PC-9 (cell line): ENCODE measurements at regions of chr5 and their contacts with region 1.

Region 1: GRCh38 chr5:143824851-143825720 is 13.1 kb downstream of the HMHB1 start:
- DNase-seq: peak; percentile 42 to 79
- H3K4me3 ChIP-seq: no peak overlapping the region
- H3K27ac ChIP-seq: no peak overlapping the region
- H3K4me1 ChIP-seq: peaks cover 15% of the 10 kb centered on the region
- H3K27me3 ChIP-seq: no peaks in the 10 kb centered on the region
- CTCF ChIP-seq: peak; percentile 97

Region 2: GRCh38 chr5:143106174-143106573 is 718.9 kb before region 1 on chr5:
- CTCF ChIA-PET with region 1: interaction called, 3 read pairs
- POLR2A ChIA-PET with region 1: no interaction called
- intact Hi-C with region 1: loop called (anchors 5 kb)
- DNase-seq: peak; percentile 20 to 40
- H3K4me3 ChIP-seq: no peak overlapping the region
- H3K27ac ChIP-seq: no peak overlapping the region
- H3K4me1 ChIP-seq: peaks cover 22% of the 10 kb centered on the region
- H3K27me3 ChIP-seq: no peaks in the 10 kb centered on the region
- CTCF ChIP-seq: 0 out of 2 replicates have a peak, but pooled peaks have one; percentile 20

Region 3: DNA sequence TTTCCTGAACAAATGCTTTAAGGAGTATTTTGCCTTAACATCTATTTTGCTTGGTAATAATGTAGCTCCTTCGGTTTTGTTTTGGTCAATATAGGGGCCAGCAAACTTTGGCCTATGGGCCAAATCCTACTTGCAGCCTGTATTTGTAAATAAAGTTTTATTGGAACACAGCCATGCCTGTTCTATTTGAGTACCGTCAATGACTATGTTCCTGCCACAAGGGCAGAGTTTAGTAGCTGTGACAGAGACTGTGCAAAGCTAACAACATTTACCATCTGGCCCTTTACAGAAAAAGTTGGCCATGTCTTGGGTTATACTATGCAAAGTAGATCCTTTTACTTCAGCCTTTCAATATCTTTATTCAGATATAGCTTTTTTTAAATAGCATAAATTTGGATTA is 535.0 kb before region 1 on chr5:
- CTCF ChIA-PET with region 1: no interaction called
- POLR2A ChIA-PET with region 1: no interaction called
- intact Hi-C with region 1: loop called (anchors 10 kb)
- DNase-seq: no peak
- H3K4me3 ChIP-seq: no peak overlapping the region
- H3K27ac ChIP-seq: no peak overlapping the region
- H3K4me1 ChIP-seq: no peaks in the 10 kb centered on the region
- H3K27me3 ChIP-seq: no peaks in the 10 kb centered on the region
- CTCF ChIP-seq: no peak

Region 4: DNA sequence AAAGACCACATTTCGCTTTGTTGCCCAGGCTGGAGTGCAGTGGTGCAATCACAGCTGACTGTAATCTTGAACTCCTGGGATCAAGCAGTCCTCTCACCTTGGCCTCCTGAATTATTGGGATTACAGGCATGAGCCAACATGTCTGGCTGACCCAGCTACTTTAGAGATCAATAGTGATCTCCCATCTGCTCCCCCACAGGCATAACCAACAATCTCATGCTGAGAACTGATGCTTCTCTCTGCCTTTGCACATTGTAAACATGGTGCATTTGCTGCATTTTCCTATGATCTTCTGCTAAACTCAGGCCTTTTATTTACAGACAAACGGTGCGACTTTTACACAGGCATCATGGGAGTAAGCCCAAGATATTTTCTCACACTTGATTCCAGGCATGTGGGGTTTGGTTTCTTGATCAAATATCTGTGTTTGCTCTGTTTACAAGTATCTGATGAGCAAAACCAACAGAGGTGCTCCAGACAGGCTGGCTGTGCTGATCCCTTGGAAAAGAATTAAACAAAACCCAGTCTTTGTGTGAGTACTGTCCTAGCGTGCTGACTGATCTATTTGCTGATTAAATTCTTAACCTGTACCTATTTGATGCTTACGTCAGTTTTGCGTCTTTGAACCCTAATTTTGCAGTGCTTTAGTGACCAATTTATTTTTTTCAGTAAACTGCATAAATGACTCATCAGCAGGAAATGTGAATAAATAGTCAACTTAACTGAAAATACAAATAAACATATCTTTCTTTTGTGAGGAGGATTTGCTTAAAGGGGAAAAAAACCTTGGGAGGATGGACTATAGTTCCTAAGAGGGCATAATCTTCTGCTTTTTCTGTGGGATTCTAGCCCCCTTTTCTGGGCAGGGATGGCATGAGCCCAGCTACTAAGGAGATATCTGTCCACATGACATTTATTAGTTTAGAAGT is 229.9 kb before region 1 on chr5:
- CTCF ChIA-PET with region 1: no interaction called
- POLR2A ChIA-PET with region 1: no interaction called
- intact Hi-C with region 1: loop called (anchors 1 kb)
- DNase-seq: peak; percentile 46 to 83
- H3K4me3 ChIP-seq: 0 out of 2 replicates have a peak overlapping the region, but pooled peaks have one; percentile 16
- H3K27ac ChIP-seq: peak overlapping the region; percentile 97
- H3K4me1 ChIP-seq: peaks cover 29% of the 10 kb centered on the region
- H3K27me3 ChIP-seq: no peaks in the 10 kb centered on the region
- CTCF ChIP-seq: no peak

Region 5: DNA sequence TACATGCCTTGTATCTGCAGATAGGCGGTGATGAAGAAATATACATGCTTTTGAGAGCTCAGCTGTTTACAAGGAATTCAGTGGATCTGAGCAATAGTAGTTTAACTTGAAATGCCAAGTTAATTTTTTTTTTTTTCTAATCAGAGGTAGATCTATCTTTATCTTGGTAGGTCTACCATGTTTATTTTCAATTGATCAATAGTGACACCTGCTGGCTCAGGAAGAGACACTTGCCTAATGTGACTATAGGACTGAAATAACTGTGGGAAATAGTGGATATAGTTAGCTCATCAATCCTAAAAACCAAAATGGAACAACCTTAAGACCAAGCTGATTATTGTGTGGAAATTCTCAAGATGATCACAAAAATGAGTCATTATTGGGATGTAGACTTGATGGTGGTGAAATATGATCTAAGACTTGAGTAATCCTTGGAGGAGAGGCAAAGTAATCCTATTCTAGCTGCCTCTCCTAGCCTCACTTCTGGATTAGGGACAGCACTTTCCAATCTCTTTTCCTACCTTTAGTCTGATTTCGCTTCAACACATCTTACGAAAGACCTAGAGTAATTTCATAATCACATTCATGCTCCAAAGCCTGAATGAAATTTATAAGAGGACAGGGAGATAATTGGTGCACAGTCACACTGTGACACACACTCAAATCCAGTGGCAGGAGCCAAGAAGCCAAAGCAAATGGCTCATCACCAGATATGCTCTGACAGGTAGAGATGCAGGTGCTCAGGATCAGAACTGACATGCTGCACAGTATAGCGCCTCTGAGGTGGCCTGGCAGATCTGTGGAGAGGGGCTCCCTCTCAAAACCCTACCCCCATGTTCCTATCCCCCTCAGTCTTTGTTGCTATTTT is 143.2 kb after region 1 on chr5:
- CTCF ChIA-PET with region 1: no interaction called
- POLR2A ChIA-PET with region 1: interaction called, 3 read pairs
- intact Hi-C with region 1: loop called (anchors 1 kb)
- DNase-seq: peak; percentile 21 to 79
- H3K4me3 ChIP-seq: no peak overlapping the region
- H3K27ac ChIP-seq: peak overlapping the region; percentile 47; the same call in 1 of the 2 replicates
- H3K4me1 ChIP-seq: peaks cover 46% of the 10 kb centered on the region
- H3K27me3 ChIP-seq: no peaks in the 10 kb centered on the region
- CTCF ChIP-seq: peak; percentile 68